ENCODE measurements at regions of chr1 and their contacts with region 1.

Region 1: DNA sequence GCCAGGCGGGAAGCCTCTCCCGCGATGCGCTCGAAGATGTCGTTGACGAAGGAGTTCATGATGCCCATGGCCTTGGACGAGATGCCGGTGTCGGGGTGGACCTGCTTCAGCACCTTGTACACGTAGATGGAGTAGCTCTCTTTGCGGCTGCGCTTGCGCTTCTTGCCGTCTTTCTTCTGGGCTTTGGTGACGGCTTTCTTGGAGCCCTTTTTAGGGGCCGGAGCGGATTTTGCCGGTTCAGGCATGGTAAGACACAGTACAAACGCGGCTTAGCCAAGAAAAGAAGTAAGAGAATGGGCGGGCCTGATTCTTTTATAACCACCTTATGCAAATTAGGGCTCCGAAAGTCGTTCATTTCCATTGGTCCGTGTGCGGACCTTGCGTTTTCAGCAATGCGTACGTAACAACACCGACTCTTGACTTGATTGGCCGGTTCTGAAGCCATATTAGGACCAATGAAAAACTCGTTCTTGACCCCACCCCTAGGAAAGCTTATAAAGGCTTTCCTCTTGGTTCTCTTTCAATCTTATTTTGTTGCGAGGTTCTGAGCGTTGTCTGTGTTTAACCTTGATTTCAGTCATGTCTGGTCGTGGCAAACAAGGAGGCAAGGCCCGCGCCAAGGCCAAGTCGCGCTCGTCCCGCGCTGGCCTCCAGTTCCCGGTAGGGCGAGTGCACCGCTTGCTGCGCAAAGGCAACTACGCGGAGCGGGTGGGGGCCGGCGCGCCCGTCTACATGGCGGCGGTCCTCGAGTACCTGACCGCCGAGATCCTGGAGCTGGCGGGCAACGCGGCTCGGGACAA is 12.8 kb upstream of the BOLA1 start:
- DNase-seq: peak; percentile 87 to 92
- H3K4me3 ChIP-seq: peak overlapping the region; percentile 70 to 92 (median 82)
- H3K27ac ChIP-seq: peak overlapping the region; percentile 98
- H3K4me1 ChIP-seq: peaks cover 0 to 5% (median 0%) of the 10 kb centered on the region in 4 experiments; a peak in 4 of 7 replicates
- H3K27me3 ChIP-seq: no peaks in the 10 kb centered on the region
- CTCF ChIP-seq: no peak
- EP300 ChIP-seq: peak in 1 of 2 experiments; percentile 14; a peak in 1 of 3 replicates
- POLR2A ChIP-seq: peak; percentile 93 to 95
- RAD21 ChIP-seq: no peak

Region 2: GRCh38 chr1:149844101-149844500 is 42.5 kb before region 1 on chr1:
- CTCF ChIA-PET with region 1: interaction called, 9 read pairs
- POLR2A ChIA-PET with region 1: interaction called, 278 read pairs
- DNase-seq: no peak
- H3K4me3 ChIP-seq: peak overlapping the region; percentile 60 to 93 (median 92)
- H3K27ac ChIP-seq: no peak overlapping the region
- H3K4me1 ChIP-seq: peaks cover 0 to 21% (median 6%) of the 10 kb centered on the region in 4 experiments; a peak in 3 of 7 replicates
- H3K27me3 ChIP-seq: no peaks in the 10 kb centered on the region
- CTCF ChIP-seq: no peak
- EP300 ChIP-seq: no peak
- POLR2A ChIP-seq: no peak; a peak in 2 of 3 replicates
- RAD21 ChIP-seq: no peak

Region 3: GRCh38 chr1:149917571-149918144 is 31.1 kb after region 1 on chr1 and contains the start of gene SV2A:
- CTCF ChIA-PET with region 1: interaction called, 10 read pairs
- POLR2A ChIA-PET with region 1: interaction called, 30 read pairs
- DNase-seq: peak in 1 of 2 experiments; percentile 72
- H3K4me3 ChIP-seq: peak within 1 kb of the TSS; percentile 85 to 99 (median 92)
- H3K27ac ChIP-seq: no peak within 1 kb of the TSS
- H3K4me1 ChIP-seq: peaks cover 4 to 19% (median 11%) of the 10 kb centered on the region in 4 experiments
- H3K27me3 ChIP-seq: no peaks in the 10 kb centered on the region
- CTCF ChIP-seq: no peak
- EP300 ChIP-seq: peak in 1 of 2 experiments; percentile 59; a peak in 1 of 3 replicates
- POLR2A ChIP-seq: peak in 1 of 2 experiments; percentile 50; a peak in 1 of 3 replicates
- RAD21 ChIP-seq: no peak
- total RNA-seq, gene SV2A: 51.8 and 52.9 TPM in 2 replicates

Region 4: DNA sequence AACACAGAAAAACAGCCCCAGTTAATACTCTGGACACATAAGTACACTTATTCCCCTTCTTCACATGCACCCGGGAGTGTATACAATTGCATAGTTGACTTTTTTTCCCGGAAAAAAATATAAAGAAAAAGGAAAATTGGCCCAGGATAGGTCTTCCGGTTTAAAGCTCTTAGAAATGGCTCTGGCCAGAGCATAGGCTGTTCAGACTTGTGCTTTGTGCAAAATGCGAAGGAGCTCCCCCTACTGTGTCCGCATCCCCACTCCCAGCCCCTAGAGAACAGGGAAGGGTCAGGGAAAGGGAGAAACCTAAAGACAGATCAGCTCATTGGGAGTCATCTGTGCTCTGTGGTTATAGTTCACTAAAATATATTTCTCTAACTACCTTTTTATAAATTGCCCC is 55.6 kb after region 1 on chr1:
- CTCF ChIA-PET with region 1: interaction called, 14 read pairs
- POLR2A ChIA-PET with region 1: interaction called, 65 read pairs
- DNase-seq: no peak
- H3K4me3 ChIP-seq: no peak overlapping the region
- H3K27ac ChIP-seq: no peak overlapping the region
- H3K4me1 ChIP-seq: peaks cover 4 to 18% (median 11%) of the 10 kb centered on the region in 4 experiments
- H3K27me3 ChIP-seq: no peaks in the 10 kb centered on the region
- CTCF ChIP-seq: peak; percentile 42 to 56 (median 43)
- EP300 ChIP-seq: no peak
- POLR2A ChIP-seq: no peak
- RAD21 ChIP-seq: peak; percentile 32 to 53; a peak in 3 of 4 replicates

Region 5: GRCh38 chr1:150067184-150068036 is 180.8 kb after region 1 on chr1 and contains the start of gene VPS45:
- CTCF ChIA-PET with region 1: no interaction called
- POLR2A ChIA-PET with region 1: interaction called, 19 read pairs
- DNase-seq: peak; percentile 67 to 90
- H3K4me3 ChIP-seq: peak within 1 kb of the TSS; percentile 81 to 95 (median 91)
- H3K27ac ChIP-seq: peak within 1 kb of the TSS; percentile 93
- H3K4me1 ChIP-seq: no peaks in the 10 kb centered on the region
- H3K27me3 ChIP-seq: no peaks in the 10 kb centered on the region
- CTCF ChIP-seq: no peak
- EP300 ChIP-seq: no peak
- POLR2A ChIP-seq: no peak; a peak in 2 of 3 replicates
- RAD21 ChIP-seq: no peak
- total RNA-seq, gene VPS45: 27.6 and 29.9 TPM in 2 replicates

Region 6: DNA sequence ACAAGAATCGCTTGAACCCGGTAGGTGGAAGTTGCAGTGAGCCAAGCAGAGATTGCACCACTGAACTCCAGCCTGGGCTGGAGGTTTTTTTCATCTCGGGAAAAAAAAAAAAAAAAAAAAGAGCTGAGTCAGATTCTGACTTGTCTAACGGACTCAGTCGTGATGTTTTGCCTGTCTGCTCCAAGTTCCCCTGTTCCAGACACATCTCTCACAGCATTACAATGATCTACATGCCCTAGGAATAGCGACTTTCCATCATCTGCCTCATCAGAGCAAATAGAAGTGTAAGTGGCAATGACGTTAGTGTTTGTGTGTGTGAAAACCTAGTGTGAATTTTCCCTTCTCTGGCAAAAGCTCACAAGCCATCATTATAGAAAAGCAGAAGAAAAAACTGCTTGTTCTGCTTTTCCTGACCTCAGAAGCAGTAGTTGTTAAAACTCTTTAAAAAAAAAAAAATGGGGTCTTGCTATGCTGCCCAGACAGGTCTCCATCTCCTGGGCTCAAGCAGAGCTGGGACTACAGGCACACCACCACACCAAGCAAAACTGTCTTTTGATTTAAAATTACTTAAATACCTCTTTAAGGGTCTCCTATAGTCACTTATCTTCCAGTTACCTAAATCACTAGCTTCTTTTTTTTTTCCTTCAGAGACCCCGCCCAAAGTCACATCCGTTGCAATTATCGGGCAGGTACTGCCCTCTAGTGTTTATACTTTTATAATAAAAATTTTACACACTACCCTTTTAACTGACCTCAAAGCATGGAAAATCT is 300.4 kb after region 1 on chr1:
- CTCF ChIA-PET with region 1: interaction called, 4 read pairs
- POLR2A ChIA-PET with region 1: interaction called, 22 read pairs
- DNase-seq: no peak
- H3K4me3 ChIP-seq: no peak overlapping the region
- H3K27ac ChIP-seq: no peak overlapping the region
- H3K4me1 ChIP-seq: peaks cover 0 to 3% (median 0%) of the 10 kb centered on the region in 4 experiments; a peak in 1 of 7 replicates
- H3K27me3 ChIP-seq: no peaks in the 10 kb centered on the region
- CTCF ChIP-seq: peak in 2 of 3 experiments; percentile 4 to 38; a peak in 2 of 4 replicates
- EP300 ChIP-seq: no peak
- POLR2A ChIP-seq: no peak
- RAD21 ChIP-seq: peak; percentile 75 to 79

Measured in H1 (cell line).